T-cell (primary cell): ENCODE measurements at regions of chr7 and their contacts with region 1.

Region 1: GRCh38 chr7:102433219-102434038 is at the start of gene ORAI2:
- DNase-seq: peak; percentile 66 to 92 (median 80)
- ATAC-seq: peak; percentile 72 to 80 (median 76)
- H3K4me3 ChIP-seq: peak within 1 kb of the TSS; percentile 80 to 81
- H3K4me3 Mint-ChIP-seq: peak within 1 kb of the TSS; percentile 79 to 84 (median 84)
- H3K27ac ChIP-seq: peak within 1 kb of the TSS; percentile 97
- H3K27ac Mint-ChIP-seq: peak within 1 kb of the TSS; percentile 100
- H3K4me1 ChIP-seq: peaks cover 42 to 63% of the 10 kb centered on the region in 2 experiments
- H3K4me1 Mint-ChIP-seq: peaks cover 49 to 63% (median 59%) of the 10 kb centered on the region in 3 donors
- H3K27me3 ChIP-seq: no peaks in the 10 kb centered on the region
- H3K27me3 Mint-ChIP-seq: no peaks in the 10 kb centered on the region
- total RNA-seq, gene ORAI2: 23.0 to 47.5 (median 37.8) TPM

Region 2: GRCh38 chr7:101410743-101411507 is 1022.5 kb before region 1 on chr7:
- CTCF ChIA-PET with region 1: no interaction called
- POLR2A ChIA-PET with region 1: no interaction called
- DNase-seq: peak in 30 of 35 experiments; percentile 4 to 59 (median 23)
- ATAC-seq: peak in 3 of 4 experiments; percentile 39 to 59 (median 55)
- H3K4me3 ChIP-seq: no peak overlapping the region
- H3K4me3 Mint-ChIP-seq: peak overlapping the region in 1 of 3 donors; percentile 39
- H3K27ac ChIP-seq: no peak overlapping the region
- H3K27ac Mint-ChIP-seq: peak overlapping the region in 1 of 2 donors; percentile 14
- H3K4me1 ChIP-seq: peaks cover 0 to 8% of the 10 kb centered on the region in 2 experiments
- H3K4me1 Mint-ChIP-seq: peaks cover 7 to 11% (median 8%) of the 10 kb centered on the region in 3 donors
- H3K27me3 ChIP-seq: peaks cover 0 to 20% of the 10 kb centered on the region in 2 experiments
- H3K27me3 Mint-ChIP-seq: peaks cover 9 to 20% of the 10 kb centered on the region in 2 donors

Region 3: DNA sequence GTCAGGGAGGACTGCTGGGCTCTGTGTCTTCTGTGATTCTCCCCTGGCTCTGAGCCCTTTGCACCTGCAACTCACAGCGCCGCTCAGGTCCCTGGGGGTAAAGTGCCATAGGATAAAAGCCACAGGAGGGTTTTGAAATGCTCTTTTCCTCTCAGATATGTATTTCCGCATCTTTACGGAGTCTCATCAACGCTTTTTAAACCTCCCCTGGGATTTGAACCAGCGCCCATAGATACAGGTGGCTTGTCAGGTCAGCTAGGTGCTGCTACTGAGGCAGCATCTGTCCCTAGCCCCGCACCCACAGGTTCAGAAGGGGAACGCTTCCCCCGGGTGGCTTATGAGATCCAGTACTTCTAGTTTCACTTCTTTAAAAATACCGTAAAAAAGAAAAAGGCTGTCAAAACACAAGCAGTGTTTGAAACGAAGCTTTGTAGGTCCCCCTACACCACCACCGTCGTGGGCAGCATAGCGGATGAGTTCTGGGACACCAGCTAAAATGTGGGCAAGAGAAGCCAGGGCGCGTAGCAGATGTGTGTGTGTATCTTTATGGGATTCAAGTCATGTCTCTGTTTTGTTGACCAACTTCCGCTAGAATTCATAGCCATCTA is 442.5 kb before region 1 on chr7:
- CTCF ChIA-PET with region 1: no interaction called
- POLR2A ChIA-PET with region 1: no interaction called
- DNase-seq: peak in 7 of 35 experiments; percentile 3 to 31 (median 6)
- ATAC-seq: peak in 2 of 4 experiments; percentile 19 to 36
- H3K4me3 ChIP-seq: peak overlapping the region in 1 of 2 donors; percentile 39
- H3K4me3 Mint-ChIP-seq: peak overlapping the region; percentile 43 to 74 (median 59)
- H3K27ac ChIP-seq: no peak overlapping the region
- H3K27ac Mint-ChIP-seq: peak overlapping the region in 1 of 2 donors; percentile 68
- H3K4me1 ChIP-seq: peaks cover 0 to 11% of the 10 kb centered on the region in 2 experiments
- H3K4me1 Mint-ChIP-seq: peaks cover 24 to 36% (median 27%) of the 10 kb centered on the region in 3 donors
- H3K27me3 ChIP-seq: no peaks in the 10 kb centered on the region
- H3K27me3 Mint-ChIP-seq: no peaks in the 10 kb centered on the region

Region 4: DNA sequence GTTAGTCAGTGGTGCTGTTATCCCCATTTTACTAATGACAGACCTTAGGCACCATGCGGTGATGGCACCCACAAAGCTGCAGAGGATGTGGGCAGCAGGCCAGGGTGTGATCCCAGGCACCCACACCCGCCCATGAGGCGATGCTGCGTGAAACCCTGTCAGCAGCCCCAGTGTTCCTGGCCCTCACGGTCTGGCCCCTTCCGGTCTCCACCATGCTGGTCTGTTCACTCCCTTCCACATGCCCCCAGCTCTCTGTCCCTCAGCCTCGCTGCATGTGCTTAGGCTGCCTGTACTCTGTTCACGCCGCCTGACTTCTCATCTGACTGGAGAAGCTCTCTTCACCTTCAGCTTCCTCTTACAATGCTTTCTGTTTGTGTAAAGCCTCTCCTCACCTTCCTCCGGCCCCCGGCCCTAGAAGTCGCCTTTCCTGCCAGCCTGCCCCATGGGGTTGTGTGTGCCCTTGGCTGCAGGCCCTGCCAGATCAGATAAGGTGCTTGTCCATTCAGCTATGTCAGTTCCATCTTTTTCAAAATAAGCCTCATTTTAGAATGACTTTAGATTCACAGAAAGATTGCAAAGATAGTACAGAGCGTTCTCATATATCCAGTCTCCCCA is 17.6 kb before region 1 on chr7:
- CTCF ChIA-PET with region 1: interaction called, 7 to 16 read pairs
- POLR2A ChIA-PET with region 1: interaction called, 5 to 7 read pairs
- DNase-seq: peak in 34 of 35 experiments; percentile 40 to 76 (median 56)
- ATAC-seq: peak; percentile 68 to 85 (median 80)
- H3K4me3 ChIP-seq: peak overlapping the region; percentile 25 to 34
- H3K4me3 Mint-ChIP-seq: peak overlapping the region; percentile 71 to 77 (median 74)
- H3K27ac ChIP-seq: peak overlapping the region; percentile 84
- H3K27ac Mint-ChIP-seq: peak overlapping the region; percentile 99 to 100
- H3K4me1 ChIP-seq: peaks cover 35 to 66% of the 10 kb centered on the region in 2 experiments
- H3K4me1 Mint-ChIP-seq: peaks cover 60 to 73% (median 65%) of the 10 kb centered on the region in 3 donors
- H3K27me3 ChIP-seq: no peaks in the 10 kb centered on the region
- H3K27me3 Mint-ChIP-seq: no peaks in the 10 kb centered on the region